Gastrocnemius medialis (tissue), 4 donors: ENCODE measurements at regions of chr19 and their contacts with region 1.

Region 1: GRCh38 chr19:49451430-49452181 is at the start of gene PIH1D1:
- DNase-seq: peak; percentile 99
- ATAC-seq: peak; percentile 87 to 89
- H3K4me3 ChIP-seq: peak within 1 kb of the TSS; percentile 67 to 100 (median 90)
- H3K27ac ChIP-seq: peak within 1 kb of the TSS; percentile 90 to 97 (median 96)
- H3K4me1 ChIP-seq: peaks cover 15 to 26% of the 10 kb centered on the region in 2 donors
- H3K27me3 ChIP-seq: no peaks in the 10 kb centered on the region
- CTCF ChIP-seq: peak in 3 of 5 experiments; percentile 9 to 46 (median 35)
- POLR2A ChIP-seq: peak in 1 of 2 donors; percentile 53
- total RNA-seq, gene PIH1D1: 41.9 to 107 (median 79.0) TPM

Region 2: GRCh38 chr19:49391581-49392399 is 59.8 kb before region 1 on chr19:
- in situ Hi-C with region 1: loop called in 3 of 4 experiments (anchors 5 to 10 kb)
- intact Hi-C with region 1: no loop called
- DNase-seq: peak; percentile 62 to 63
- ATAC-seq: peak; percentile 88 to 91
- H3K4me3 ChIP-seq: no peak overlapping the region
- H3K27ac ChIP-seq: no peak overlapping the region
- H3K4me1 ChIP-seq: no peaks in the 10 kb centered on the region
- H3K27me3 ChIP-seq: peaks cover 0 to 14% (median 7%) of the 10 kb centered on the region in 3 donors
- CTCF ChIP-seq: peak; percentile 60 to 79 (median 75)
- POLR2A ChIP-seq: no peak

Region 3: DNA sequence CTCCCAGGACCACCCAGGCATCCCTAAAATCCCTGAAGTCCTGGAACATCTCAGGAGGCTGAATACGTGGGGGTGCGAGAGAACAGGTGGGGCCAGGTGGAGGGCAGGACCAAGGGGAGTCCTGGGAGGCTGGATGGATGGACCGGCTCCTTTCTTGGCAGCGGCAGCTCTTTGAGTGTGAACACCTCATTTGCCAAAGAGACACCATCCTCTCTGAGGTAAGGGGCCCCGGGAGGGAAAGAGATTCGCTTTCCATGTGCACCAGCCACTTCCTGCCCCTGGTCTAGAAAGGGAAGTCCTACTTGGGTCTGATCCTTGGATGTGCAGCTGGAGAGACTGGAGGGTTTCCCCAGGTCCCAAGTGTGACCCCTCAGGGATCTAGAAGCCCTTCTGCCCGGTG is 44.5 kb before region 1 on chr19:
- in situ Hi-C with region 1: no loop called
- intact Hi-C with region 1: no loop called
- DNase-seq: no peak
- ATAC-seq: no peak
- H3K4me3 ChIP-seq: no peak overlapping the region
- H3K27ac ChIP-seq: no peak overlapping the region
- H3K4me1 ChIP-seq: no peaks in the 10 kb centered on the region
- H3K27me3 ChIP-seq: no peaks in the 10 kb centered on the region
- CTCF ChIP-seq: no peak
- POLR2A ChIP-seq: no peak

Region 4: DNA sequence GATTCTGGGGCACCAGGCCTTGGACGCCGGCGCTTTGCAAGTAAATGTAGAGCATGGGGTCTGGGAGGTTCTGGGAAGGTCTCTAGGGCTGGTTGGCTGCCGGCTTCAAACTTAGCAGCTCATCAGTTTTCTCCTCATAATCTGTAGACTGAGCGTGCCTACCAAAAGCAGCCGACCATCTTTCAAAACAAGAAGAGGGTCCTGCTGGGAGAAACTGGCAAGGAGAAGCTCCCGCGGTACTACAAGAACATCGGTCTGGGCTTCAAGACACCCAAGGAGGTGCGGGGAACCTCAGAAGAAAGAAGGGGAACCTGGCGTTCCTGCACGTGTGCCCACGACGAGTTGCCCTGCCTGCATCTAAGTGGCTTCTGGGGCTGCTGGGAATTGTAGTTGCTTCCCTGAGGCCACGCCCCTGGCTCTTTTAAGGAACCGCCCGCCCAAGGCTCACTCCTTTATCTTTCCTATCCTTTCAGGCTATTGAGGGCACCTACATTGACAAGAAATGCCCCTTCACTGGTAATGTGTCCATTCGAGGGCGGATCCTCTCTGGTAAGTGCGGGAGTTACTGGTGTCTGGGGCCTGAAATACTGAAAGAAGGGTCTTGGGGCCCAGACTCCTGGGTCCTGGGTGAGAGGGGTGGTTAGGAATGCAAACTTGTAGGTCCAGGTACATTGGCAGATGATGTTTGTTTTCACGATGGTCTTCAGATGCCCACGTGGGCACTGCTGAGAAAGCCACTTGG is 45.6 kb after region 1 on chr19:
- in situ Hi-C with region 1: no loop called
- intact Hi-C with region 1: loop called (anchors 2 kb)
- DNase-seq: peak; percentile 48 to 63
- ATAC-seq: no peak
- H3K4me3 ChIP-seq: peak overlapping the region; percentile 79 to 96 (median 90)
- H3K27ac ChIP-seq: peak overlapping the region; percentile 93 to 98 (median 96)
- H3K4me1 ChIP-seq: peaks cover 27 to 31% of the 10 kb centered on the region in 2 donors
- H3K27me3 ChIP-seq: no peaks in the 10 kb centered on the region
- CTCF ChIP-seq: no peak
- POLR2A ChIP-seq: peak; percentile 24 to 62

Region 5: DNA sequence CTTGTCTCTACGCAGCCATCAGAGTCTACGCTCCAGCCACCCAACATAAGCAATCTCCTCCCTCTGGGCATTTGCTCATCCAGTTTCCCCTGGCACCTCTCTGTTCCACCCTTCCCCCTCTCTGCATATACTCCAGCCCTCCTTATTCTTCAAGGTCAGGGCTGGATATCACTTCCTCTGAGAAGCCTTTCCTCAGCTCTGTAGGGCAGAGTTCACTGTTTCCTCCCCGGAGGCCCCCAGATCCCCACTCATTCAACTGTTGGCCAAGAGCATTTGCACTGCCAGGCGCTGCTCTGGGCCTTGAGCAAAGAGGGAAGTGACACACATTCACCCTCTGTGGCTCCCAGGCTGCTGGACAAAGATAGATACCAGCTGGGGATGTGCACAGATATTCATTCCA is 64.2 kb after region 1 on chr19:
- in situ Hi-C with region 1: no loop called
- intact Hi-C with region 1: no loop called
- DNase-seq: peak in 1 of 2 donors; percentile 51
- ATAC-seq: peak in 1 of 2 donors; percentile 21
- H3K4me3 ChIP-seq: no peak overlapping the region
- H3K27ac ChIP-seq: no peak overlapping the region
- H3K4me1 ChIP-seq: peaks cover 9 to 23% of the 10 kb centered on the region in 2 donors
- H3K27me3 ChIP-seq: no peaks in the 10 kb centered on the region
- CTCF ChIP-seq: no peak
- POLR2A ChIP-seq: no peak

Region 6: GRCh38 chr19:49817964-49818648 is 366.5 kb after region 1 on chr19 and contains the start of gene MED25:
- in situ Hi-C with region 1: no loop called
- intact Hi-C with region 1: loop called (anchors 1 kb)
- DNase-seq: peak; percentile 73 to 83
- ATAC-seq: peak; percentile 71 to 72
- H3K4me3 ChIP-seq: peak within 1 kb of the TSS; percentile 78 to 96 (median 86)
- H3K27ac ChIP-seq: peak within 1 kb of the TSS; percentile 94 to 99 (median 97)
- H3K4me1 ChIP-seq: peaks cover 17 to 23% of the 10 kb centered on the region in 2 donors
- H3K27me3 ChIP-seq: no peaks in the 10 kb centered on the region
- CTCF ChIP-seq: peak in 3 of 5 experiments; percentile 35 to 65 (median 54)
- POLR2A ChIP-seq: peak; percentile 90 to 97
- total RNA-seq, gene MED25: 46.6 to 105 (median 78.7) TPM

Region 7: GRCh38 chr19:50804420-50805272 is 1353.0 kb after region 1 on chr19:
- in situ Hi-C with region 1: no loop called
- intact Hi-C with region 1: loop called (anchors 5 kb)
- DNase-seq: peak; percentile 96 to 98
- ATAC-seq: peak; percentile 98
- H3K4me3 ChIP-seq: peak overlapping the region; percentile 82 to 100 (median 84)
- H3K27ac ChIP-seq: peak overlapping the region; percentile 92 to 100 (median 94)
- H3K4me1 ChIP-seq: peaks cover 15 to 23% of the 10 kb centered on the region in 2 donors
- H3K27me3 ChIP-seq: no peaks in the 10 kb centered on the region
- CTCF ChIP-seq: peak in 1 of 5 experiments; percentile 16
- POLR2A ChIP-seq: peak; percentile 56 to 60